Right ventricle myocardium superior (tissue), 1 donor: ENCODE measurements at regions of chr2 and their contacts with region 1.

Region 1: GRCh38 chr2:112626604-112627059 is 19.1 kb upstream of the SLC20A1 start:
- DNase-seq: peak; percentile 77
- ATAC-seq: peak; percentile 89

Region 2: DNA sequence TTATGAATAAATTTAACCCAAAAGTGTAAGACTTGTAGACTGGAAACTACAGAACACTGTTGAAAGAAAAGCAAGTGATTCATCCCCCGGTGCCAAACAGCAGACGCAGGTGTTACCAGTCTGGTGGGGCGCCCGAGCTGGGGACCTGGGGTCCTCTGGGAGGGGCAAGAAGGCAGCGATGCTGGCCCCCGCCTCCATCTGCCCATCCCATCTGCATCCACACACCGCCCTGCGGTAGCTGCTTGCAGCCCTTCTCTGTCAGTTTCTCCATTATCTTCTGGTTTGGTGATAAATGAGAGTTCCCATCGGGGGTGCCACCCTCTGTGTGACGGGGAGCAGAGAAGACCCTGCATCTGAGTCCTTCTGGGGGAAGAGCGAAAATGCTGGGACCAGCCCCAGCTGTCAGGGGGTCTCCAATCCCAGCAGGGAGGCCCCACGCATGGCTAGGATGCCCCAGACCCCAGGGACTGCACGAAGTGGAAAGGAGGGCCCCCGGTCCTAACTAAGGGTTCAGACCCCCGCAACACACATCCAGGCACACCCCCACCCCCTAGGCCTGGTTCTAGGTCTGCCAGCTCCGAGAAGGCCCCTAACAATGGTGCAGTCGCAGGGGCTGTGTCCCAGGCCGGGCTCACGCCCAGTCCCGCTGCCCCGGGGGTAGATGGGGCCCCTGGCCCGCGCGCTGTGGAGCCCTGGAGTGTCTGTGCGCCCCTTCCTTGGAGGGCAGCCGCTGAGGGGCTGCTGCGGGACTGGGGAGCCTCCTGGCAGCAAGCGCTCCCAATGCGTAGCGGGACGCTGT is 192.5 kb before region 1 on chr2:
- intact Hi-C with region 1: no loop called
- DNase-seq: no peak
- ATAC-seq: no peak

Region 3: GRCh38 chr2:112666764-112667122 is 40.1 kb after region 1 on chr2:
- intact Hi-C with region 1: no loop called
- DNase-seq: no peak
- ATAC-seq: no peak

Region 4: DNA sequence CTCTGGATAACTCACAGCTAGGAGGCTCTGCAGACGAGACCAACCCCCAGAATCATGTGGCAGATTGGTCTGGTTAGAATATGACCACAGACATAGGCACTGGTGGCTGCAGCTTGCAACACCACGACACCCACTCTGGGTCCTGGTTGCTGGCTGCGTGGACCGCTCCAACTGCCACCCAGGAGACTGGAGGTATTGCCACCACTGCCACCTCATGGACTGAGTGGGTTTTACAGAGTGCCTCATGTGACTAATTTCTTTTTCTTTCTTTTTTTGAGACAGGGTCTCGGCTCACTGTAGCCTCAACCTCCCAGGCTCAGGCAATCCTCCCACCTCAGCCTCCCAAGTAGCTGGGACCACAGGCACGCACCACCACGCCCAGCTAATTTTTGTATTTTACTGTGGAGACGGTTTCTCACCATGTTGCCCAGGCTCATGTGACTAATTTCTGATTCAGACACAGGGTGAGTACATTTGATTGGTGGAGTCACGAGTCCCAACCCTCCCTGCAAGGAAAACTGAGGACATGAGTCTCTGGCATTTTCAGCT is 64.3 kb after region 1 on chr2:
- intact Hi-C with region 1: loop called (anchors 2 kb)
- DNase-seq: peak; percentile 74
- ATAC-seq: peak; percentile 85

Region 5: GRCh38 chr2:112726497-112727190 is 100.0 kb after region 1 on chr2:
- intact Hi-C with region 1: loop called (anchors 5 kb)
- DNase-seq: peak; percentile 94
- ATAC-seq: peak; percentile 97